GM12878 (cell line): ENCODE measurements at regions of chr14 and their contacts with region 1.

Region 1: GRCh38 chr14:85960756-85961155 is 430.8 kb downstream of the FLRT2 start:
- DNase-seq: no peak
- ATAC-seq: no peak
- H3K4me3 ChIP-seq: no peak overlapping the region
- H3K27ac ChIP-seq: no peak overlapping the region
- H3K4me1 ChIP-seq: no peaks in the 10 kb centered on the region
- H3K27me3 ChIP-seq: no peaks in the 10 kb centered on the region
- CTCF ChIP-seq: no peak
- EP300 ChIP-seq: no peak
- POLR2A ChIP-seq: no peak
- RAD21 ChIP-seq: no peak

Region 2: DNA sequence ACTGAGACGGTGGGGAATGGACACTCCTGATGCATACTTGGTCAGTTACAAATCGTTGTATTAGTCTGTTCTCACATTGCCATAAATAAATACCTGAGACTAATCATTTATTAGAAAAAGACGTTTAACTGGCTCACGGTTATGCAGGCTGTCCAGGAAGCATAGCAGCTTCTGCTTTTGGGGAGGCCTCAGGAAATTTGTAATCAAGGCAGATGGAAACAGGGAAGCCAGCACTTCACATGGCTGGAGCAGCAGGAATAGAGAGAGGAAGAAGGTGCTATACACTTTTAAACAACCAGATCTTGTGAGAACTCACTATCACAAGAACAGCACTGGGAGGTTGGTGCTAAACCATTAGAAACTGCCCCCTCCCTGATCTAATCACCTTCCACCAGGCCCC is 12.6 kb before region 1 on chr14:
- CTCF ChIA-PET with region 1: interaction called, 6 read pairs
- POLR2A ChIA-PET with region 1: no interaction called
- RAD21 ChIA-PET with region 1: no interaction called
- SMC1A ChIA-PET with region 1: interaction called, 24 read pairs
- in situ Hi-C with region 1: no loop called
- intact Hi-C with region 1: no loop called
- DNase-seq: no peak
- ATAC-seq: no peak
- H3K4me3 ChIP-seq: no peak overlapping the region
- H3K27ac ChIP-seq: no peak overlapping the region
- H3K4me1 ChIP-seq: no peaks in the 10 kb centered on the region
- H3K27me3 ChIP-seq: no peaks in the 10 kb centered on the region
- CTCF ChIP-seq: no peak
- EP300 ChIP-seq: no peak
- POLR2A ChIP-seq: no peak
- RAD21 ChIP-seq: no peak